Activated naive CD8-positive, alpha-beta T cell treated with anti-CD3 and anti-CD28 coated beads, Interleukin-2, amount 10 ng/mL, durations not matched to agents 7 days and 5 days (primary cell): ENCODE measurements at regions of chr7 and their contacts with region 1.

Region 1: DNA sequence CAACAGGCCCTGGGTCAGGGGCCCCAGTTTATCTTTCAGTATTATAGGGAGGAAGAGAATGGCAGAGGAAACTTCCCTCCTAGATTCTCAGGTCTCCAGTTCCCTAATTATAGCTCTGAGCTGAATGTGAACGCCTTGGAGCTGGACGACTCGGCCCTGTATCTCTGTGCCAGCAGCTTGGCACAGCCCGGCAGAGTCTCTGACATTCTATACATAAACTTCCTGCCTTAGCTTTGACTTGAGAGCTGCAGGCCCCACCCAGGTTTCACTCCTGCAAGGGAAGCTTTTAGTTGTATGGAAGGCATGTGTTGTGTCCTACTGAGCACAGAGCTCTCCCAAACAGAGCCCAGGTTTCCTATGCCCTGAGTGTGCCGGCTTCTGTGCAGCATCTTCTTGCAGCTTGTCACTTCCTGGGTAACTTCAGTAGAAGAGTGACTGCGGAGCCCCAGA is 205.6 kb upstream of the PRSS58 start:
- DNase-seq: no peak
- ATAC-seq: peak; percentile 75
- H3K4me3 Mint-ChIP-seq: peak overlapping the region; percentile 79
- H3K27ac Mint-ChIP-seq: peak overlapping the region; percentile 93
- H3K4me1 Mint-ChIP-seq: peaks cover 37% of the 10 kb centered on the region
- H3K27me3 Mint-ChIP-seq: no peaks in the 10 kb centered on the region

Region 2: GRCh38 chr7:142412551-142413193 is 50.8 kb before region 1 on chr7:
- POLR2A ChIA-PET with region 1: no interaction called
- DNase-seq: no peak
- ATAC-seq: peak; percentile 82
- H3K4me3 Mint-ChIP-seq: no peak overlapping the region
- H3K27ac Mint-ChIP-seq: no peak overlapping the region
- H3K4me1 Mint-ChIP-seq: peaks cover 2% of the 10 kb centered on the region
- H3K27me3 Mint-ChIP-seq: no peaks in the 10 kb centered on the region

Region 3: DNA sequence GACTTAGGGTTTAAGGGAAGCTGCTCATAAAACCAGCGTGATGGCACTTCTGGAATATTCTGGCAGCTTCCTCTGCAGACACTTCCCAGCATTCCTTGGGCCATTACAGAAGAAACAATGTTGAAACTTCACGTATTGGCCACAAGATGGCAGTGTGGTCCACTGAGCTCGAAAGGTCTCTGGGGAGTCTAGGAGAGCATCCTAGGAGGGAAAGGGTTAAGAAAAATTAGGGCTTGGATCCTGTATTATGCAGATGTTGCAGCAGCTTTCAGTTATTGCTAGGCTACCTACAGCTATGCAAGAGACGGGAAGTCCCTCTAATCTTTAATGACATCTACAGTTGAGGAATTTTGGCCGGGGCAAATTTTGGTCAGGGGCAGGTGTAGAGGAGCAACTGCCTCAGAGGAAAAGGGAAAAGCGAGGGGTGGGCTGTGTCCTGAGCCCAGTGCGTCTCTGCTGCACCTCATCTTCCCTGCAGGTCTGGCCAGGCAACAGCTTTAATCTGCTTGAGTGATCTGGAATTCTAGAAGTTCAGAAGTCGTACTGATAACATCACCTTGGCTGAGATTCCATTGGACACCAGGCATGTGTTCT is 15.2 kb after region 1 on chr7:
- POLR2A ChIA-PET with region 1: interaction called, 11 read pairs
- DNase-seq: no peak
- ATAC-seq: peak; percentile 29
- H3K4me3 Mint-ChIP-seq: peak overlapping the region; percentile 29
- H3K27ac Mint-ChIP-seq: no peak overlapping the region
- H3K4me1 Mint-ChIP-seq: peaks cover 41% of the 10 kb centered on the region
- H3K27me3 Mint-ChIP-seq: no peaks in the 10 kb centered on the region